Heart right ventricle (tissue), 16 donors: ENCODE measurements at regions of chr7 and their contacts with region 1.

Region 1: GRCh38 chr7:130959743-130960207 is 225.8 kb upstream of the KLF14 start:
- DNase-seq: no peak
- ATAC-seq: no peak
- H3K4me3 ChIP-seq: peak overlapping the region in 1 of 10 donors; percentile 44
- H3K27ac ChIP-seq: peak overlapping the region in 4 of 10 donors; percentile 29 to 90 (median 59)
- H3K4me1 ChIP-seq: peaks cover 0 to 93% (median 61%) of the 10 kb centered on the region in 9 donors
- H3K27me3 ChIP-seq: no peaks in the 10 kb centered on the region
- CTCF ChIP-seq: peak in 6 of 9 donors; percentile 14 to 50 (median 21)

Region 2: GRCh38 chr7:130901209-130901783 is 58.5 kb before region 1 on chr7:
- intact Hi-C with region 1: no loop called
- DNase-seq: peak; percentile 48 to 75
- ATAC-seq: peak; percentile 53 to 79 (median 71)
- H3K4me3 ChIP-seq: no peak overlapping the region
- H3K27ac ChIP-seq: peak overlapping the region in 9 of 10 donors; percentile 15 to 80 (median 66)
- H3K4me1 ChIP-seq: peaks cover 16 to 97% (median 70%) of the 10 kb centered on the region in 9 donors
- H3K27me3 ChIP-seq: no peaks in the 10 kb centered on the region
- CTCF ChIP-seq: no peak

Region 3: DNA sequence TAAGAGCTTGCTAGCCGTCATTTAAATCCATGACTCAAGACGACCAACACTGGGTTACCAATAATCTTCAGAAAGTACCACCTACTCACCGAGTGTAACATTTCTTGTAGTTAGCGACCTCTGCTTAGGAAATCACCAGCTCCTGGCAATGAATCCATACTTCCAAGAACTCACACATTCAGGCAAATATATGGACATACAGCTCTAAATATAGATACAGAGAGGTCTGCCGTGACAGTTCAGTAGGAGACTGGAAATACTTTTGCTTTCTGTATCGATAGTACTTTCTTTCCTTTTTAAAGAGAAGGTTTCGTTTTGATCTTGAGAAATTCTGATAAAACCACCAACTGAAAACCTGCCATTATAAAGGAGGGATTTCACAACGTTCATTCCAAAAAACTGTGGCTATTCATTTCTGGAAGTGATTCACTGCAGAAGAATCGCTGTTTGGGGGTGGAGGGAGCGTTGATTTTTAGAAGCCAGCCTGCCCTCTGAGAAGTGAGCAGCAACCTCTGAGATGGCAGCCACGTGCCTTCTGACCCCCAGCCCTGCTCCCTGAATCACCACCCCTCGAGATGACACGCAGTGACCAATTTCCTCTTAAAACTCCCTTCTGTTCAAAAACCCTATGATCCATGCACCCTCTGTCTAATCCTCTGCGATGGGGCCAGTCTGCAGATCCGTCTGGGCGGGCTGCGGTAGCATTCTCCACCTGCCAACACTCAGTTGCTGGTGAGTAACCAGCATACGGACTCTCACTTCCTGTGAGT is 46.7 kb before region 1 on chr7:
- intact Hi-C with region 1: loop called in 1 of 10 experiments (anchors 5 kb)
- DNase-seq: peak; percentile 29 to 67
- ATAC-seq: peak; percentile 68 to 91 (median 78)
- H3K4me3 ChIP-seq: peak overlapping the region in 9 of 10 donors; percentile 14 to 59 (median 49)
- H3K27ac ChIP-seq: peak overlapping the region; percentile 30 to 92 (median 82)
- H3K4me1 ChIP-seq: peaks cover 15 to 86% (median 63%) of the 10 kb centered on the region in 9 donors
- H3K27me3 ChIP-seq: no peaks in the 10 kb centered on the region
- CTCF ChIP-seq: no peak